ENCODE measurements at regions of chr5 and their contacts with region 1.

Region 1: DNA sequence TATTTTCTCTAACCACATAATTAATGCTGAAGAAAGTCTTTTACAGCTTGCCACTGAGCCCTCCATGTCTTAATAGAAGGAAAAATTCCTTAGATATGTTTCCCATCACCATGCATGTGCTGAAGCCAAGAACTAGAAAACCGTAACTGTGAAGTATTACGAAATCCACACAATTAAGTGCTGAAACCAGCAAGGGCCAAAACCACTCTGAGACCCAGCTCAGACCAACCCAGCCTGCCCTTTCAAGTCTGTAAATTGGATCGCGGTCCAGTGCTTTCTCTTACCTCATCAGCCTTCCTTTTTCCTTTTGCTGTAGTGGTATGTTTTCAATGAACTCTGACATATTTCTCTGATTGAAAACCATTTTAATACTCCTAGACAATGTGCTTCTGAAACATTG is 26.3 kb downstream of the SEMA5A start:
- DNase-seq: no peak
- CTCF ChIP-seq: no peak

Region 2: DNA sequence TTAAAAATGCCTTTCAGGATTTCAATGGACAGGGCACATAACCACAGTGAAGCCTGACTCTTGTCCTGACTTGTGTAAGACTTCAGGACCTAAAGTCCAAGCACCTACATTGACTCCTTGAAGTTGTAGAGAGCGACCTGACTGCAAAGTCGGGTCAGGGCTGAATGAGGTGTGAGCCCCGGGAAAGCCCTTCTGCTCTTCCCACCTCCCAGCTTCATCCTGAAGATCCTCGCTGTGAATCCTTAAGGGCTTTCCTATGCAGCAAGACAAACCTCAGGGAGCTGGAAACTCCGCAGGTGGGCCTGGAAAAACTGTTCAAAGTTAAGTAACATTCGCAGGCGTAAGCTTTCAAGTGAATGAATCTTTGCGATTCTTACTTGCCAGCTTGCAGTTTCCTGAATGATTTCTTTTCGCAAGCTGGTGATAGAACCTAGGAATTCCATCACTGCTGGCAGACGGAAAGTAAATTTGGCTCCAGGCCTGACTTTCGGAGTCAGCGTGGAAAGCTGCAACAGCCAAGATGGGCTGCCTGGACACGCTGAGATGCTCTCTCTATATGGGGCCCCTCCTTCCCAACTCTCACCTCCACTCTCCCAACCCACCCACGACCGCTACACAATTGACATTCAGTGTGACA is 15.5 kb after region 1 on chr5:
- CTCF ChIA-PET with region 1: interaction called, 11 read pairs
- POLR2A ChIA-PET with region 1: no interaction called
- DNase-seq: no peak
- CTCF ChIP-seq: no peak

Region 3: DNA sequence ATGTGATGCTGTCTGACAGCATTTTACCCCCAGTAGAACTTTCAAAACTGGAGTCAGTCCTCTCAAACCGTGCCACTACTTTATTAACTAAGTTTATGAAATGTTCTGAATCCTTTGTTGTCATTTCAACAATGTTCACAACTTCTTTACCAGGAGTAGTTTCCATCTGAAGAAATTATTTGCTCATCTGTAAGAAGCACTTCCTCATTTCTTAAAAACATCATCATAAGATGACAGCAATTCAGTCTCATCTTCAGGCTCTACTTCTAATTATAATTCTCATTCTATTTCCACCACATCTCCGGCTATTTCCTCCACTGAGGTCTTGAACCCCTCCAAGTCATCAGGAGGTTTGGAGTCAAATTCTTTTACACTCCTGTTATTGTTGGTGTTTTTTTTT is 113.0 kb after region 1 on chr5:
- CTCF ChIA-PET with region 1: no interaction called
- POLR2A ChIA-PET with region 1: no interaction called
- DNase-seq: no peak
- CTCF ChIP-seq: no peak